Adrenal gland (tissue), 19 donors: ENCODE measurements at regions of chr5 and their contacts with region 1.

Region 1: DNA sequence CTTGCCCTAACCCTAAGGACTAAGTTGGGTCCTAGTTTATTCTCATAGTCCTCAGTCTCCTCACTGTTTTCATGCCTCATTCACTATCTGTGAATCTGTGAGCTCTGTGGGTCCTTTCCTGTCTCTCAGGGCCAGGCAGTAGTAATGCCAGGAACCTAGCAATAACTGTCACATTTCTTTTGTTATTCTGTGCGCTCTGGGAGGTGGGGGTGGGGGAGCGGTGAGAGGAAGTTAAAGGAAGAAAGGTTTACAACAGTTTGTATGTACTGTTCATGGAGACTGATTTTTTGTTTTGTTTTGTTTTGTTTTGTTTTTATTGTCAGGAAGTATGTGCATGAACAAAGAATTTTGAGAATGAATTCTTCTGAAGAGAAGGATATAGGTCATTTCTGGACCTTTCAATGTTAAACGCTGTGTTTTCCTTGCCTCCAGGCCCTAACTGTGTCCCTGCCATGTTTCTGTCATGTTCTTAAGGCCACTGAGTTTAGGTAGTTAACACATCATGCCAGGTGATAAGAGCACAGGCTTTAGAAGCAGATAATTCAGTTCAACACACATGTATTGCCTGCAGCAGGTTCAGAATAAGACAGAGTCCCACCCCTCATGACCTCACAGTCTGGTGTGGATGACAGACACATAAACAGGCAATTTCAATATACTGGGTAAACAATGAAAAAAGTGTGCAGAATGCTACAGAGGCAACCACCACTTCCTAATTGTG is 13.3 kb upstream of the FEM1C start:
- DNase-seq: no peak
- H3K4me3 ChIP-seq: no peak overlapping the region
- H3K27ac ChIP-seq: peak overlapping the region in 1 of 5 donors; percentile 21
- H3K4me1 ChIP-seq: no peaks in the 10 kb centered on the region
- H3K27me3 ChIP-seq: no peaks in the 10 kb centered on the region
- CTCF ChIP-seq: no peak
- POLR2A ChIP-seq: no peak

Region 2: GRCh38 chr5:115169487-115170133 is 388.2 kb before region 1 on chr5 and contains the start of gene TRIM36:
- intact Hi-C with region 1: loop called in 1 of 2 experiments (anchors 5 kb)
- DNase-seq: peak; percentile 93 to 97 (median 96)
- H3K4me3 ChIP-seq: peak within 1 kb of the TSS; percentile 33 to 88 (median 84)
- H3K27ac ChIP-seq: peak within 1 kb of the TSS in 3 of 5 donors; percentile 52 to 76 (median 75)
- H3K4me1 ChIP-seq: peaks cover 0 to 15% of the 10 kb centered on the region in 2 donors
- H3K27me3 ChIP-seq: peaks cover 6% of the 10 kb centered on the region
- CTCF ChIP-seq: peak in 1 of 6 experiments; percentile 12
- POLR2A ChIP-seq: peak; percentile 67 to 97
- total RNA-seq, gene TRIM36: 0.36 to 23.5 (median 3.3) TPM

Region 3: DNA sequence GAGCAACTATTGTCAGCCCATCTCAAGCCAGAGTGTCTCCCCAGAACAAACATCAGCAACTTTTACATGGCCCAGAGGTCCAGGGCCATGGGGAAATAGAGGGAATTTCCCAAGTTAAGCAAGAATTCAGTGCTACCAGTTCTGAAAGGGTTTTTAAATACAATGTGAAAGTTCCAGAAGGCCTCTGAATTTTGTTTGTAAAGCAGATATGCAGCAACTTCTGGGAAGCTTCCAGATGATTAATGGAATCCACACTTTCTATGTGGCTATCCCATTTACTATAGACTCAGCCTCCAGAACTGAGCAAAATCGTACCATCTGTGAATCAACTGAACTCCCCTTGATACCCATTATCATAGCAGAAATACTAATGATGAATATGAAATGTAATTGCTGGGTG is 107.1 kb before region 1 on chr5:
- intact Hi-C with region 1: no loop called
- DNase-seq: no peak
- H3K4me3 ChIP-seq: no peak overlapping the region
- H3K27ac ChIP-seq: peak overlapping the region in 2 of 5 donors; percentile 9 to 23
- H3K4me1 ChIP-seq: peaks cover 3 to 15% of the 10 kb centered on the region in 2 donors
- H3K27me3 ChIP-seq: no peaks in the 10 kb centered on the region
- CTCF ChIP-seq: no peak
- POLR2A ChIP-seq: no peak

Region 4: DNA sequence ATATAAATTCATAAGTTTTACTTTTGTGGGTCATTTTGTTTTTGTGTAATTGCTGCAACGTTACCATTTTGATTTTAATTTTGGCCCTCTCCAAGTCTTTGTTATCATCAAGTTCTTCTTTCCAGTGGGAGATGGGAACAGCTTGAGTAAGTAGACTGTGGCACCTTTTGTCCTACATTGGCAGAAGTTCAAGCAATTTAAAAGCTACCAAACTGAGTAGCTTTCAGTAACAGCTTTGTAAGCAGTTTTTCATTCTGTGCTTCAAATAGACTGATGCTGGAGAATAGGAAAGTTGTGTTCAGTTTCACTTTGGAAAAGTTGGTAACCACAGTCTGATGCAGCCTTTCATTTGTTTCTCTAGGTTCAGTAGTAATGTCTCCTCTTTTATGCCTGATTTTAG is 115.8 kb after region 1 on chr5:
- intact Hi-C with region 1: no loop called
- DNase-seq: no peak
- H3K4me3 ChIP-seq: no peak overlapping the region
- H3K27ac ChIP-seq: no peak overlapping the region
- H3K4me1 ChIP-seq: no peaks in the 10 kb centered on the region
- H3K27me3 ChIP-seq: no peaks in the 10 kb centered on the region
- CTCF ChIP-seq: no peak
- POLR2A ChIP-seq: no peak